Aorta (tissue), 5 donors: ENCODE measurements at regions of chr1 and their contacts with region 1.

Region 1: GRCh38 chr1:37137014-37137413 is 102.7 kb upstream of the GRIK3 start:
- DNase-seq: no peak
- ATAC-seq: no peak
- H3K4me3 ChIP-seq: no peak overlapping the region
- H3K27ac ChIP-seq: no peak overlapping the region
- H3K4me1 ChIP-seq: no peaks in the 10 kb centered on the region
- H3K27me3 ChIP-seq: peaks cover 0 to 2% of the 10 kb centered on the region in 2 donors

Region 2: GRCh38 chr1:38783640-38784229 is 1646.7 kb after region 1 on chr1:
- intact Hi-C with region 1: loop called in 1 of 2 experiments (anchors 5 kb)
- DNase-seq: no peak
- ATAC-seq: no peak
- H3K4me3 ChIP-seq: no peak overlapping the region
- H3K27ac ChIP-seq: no peak overlapping the region
- H3K4me1 ChIP-seq: no peaks in the 10 kb centered on the region
- H3K27me3 ChIP-seq: no peaks in the 10 kb centered on the region